ENCODE measurements at regions of chr10 and their contacts with region 1.

Region 1: GRCh38 chr10:117946525-117947070 is 100.1 kb downstream of the RAB11FIP2 start:
- DNase-seq: peak; percentile 76
- ATAC-seq: peak; percentile 67
- H3K4me3 ChIP-seq: no peak overlapping the region
- H3K27ac ChIP-seq: peak overlapping the region; percentile 45
- H3K4me1 ChIP-seq: peaks cover 12% of the 10 kb centered on the region
- H3K27me3 ChIP-seq: no peaks in the 10 kb centered on the region
- CTCF ChIP-seq: no peak

Region 2: GRCh38 chr10:117896517-117896916 is 50.1 kb before region 1 on chr10:
- CTCF ChIA-PET with region 1: no interaction called
- POLR2A ChIA-PET with region 1: interaction called, 14 read pairs
- intact Hi-C with region 1: no loop called
- DNase-seq: no peak
- ATAC-seq: no peak
- H3K4me3 ChIP-seq: no peak overlapping the region
- H3K27ac ChIP-seq: no peak overlapping the region
- H3K4me1 ChIP-seq: no peaks in the 10 kb centered on the region
- H3K27me3 ChIP-seq: peaks cover 9% of the 10 kb centered on the region
- CTCF ChIP-seq: no peak

Region 3: DNA sequence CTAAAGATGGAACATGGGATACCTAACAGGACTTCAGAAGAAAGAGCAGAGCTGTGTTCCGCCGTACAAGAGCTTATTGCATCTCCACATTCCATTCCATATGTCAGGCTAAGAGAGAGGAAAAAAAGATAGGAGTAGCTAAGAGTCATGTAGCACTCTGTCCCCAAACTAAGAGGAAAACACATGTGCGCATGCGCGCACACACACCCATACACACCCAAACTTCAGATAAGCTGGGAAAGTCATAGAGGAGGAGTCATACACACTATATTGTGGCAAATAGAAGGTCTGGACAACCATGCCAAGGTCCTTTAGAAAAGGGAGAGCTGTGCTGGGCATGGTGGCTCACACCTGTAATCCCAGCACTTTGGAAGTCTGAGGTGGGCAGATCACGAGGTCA is 32.3 kb before region 1 on chr10:
- CTCF ChIA-PET with region 1: no interaction called
- POLR2A ChIA-PET with region 1: no interaction called
- intact Hi-C with region 1: no loop called
- DNase-seq: no peak
- ATAC-seq: no peak
- H3K4me3 ChIP-seq: no peak overlapping the region
- H3K27ac ChIP-seq: no peak overlapping the region
- H3K4me1 ChIP-seq: no peaks in the 10 kb centered on the region
- H3K27me3 ChIP-seq: peaks cover 27% of the 10 kb centered on the region
- CTCF ChIP-seq: no peak

Region 4: DNA sequence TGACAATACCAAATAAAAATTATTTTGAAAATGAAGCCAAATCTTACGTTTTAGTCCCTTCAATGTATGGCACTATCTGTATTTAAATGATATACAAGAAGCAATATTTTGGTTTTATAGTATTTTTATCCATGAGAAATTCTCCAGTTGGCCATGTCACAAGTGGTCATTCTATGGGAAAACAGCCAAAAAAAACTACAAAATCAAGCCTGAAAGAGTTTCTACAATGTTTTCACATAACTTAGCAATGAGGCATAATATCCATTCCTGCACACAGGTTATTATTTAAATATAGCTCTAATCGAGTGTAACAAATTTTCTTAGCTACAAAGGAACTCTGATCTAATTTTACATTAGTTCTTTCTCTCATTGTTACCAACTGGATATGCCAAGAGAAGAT is 94.7 kb after region 1 on chr10:
- CTCF ChIA-PET with region 1: no interaction called
- POLR2A ChIA-PET with region 1: no interaction called
- intact Hi-C with region 1: loop called (anchors 5 kb)
- DNase-seq: peak; percentile 62
- ATAC-seq: no peak
- H3K4me3 ChIP-seq: no peak overlapping the region
- H3K27ac ChIP-seq: no peak overlapping the region
- H3K4me1 ChIP-seq: peaks cover 40% of the 10 kb centered on the region
- H3K27me3 ChIP-seq: no peaks in the 10 kb centered on the region
- CTCF ChIP-seq: no peak